Cardiac septum (tissue), 1 donor: ENCODE measurements at regions of chr3 and their contacts with region 1.

Region 1: GRCh38 chr3:152268555-152269425 is at the start of gene MBNL1:
- DNase-seq: peak; percentile 94
- total RNA-seq, gene MBNL1: 178 TPM

Region 2: GRCh38 chr3:152183473-152183872 is 85.3 kb before region 1 on chr3:
- intact Hi-C with region 1: loop called (anchors 5 kb)
- DNase-seq: no peak

Region 3: DNA sequence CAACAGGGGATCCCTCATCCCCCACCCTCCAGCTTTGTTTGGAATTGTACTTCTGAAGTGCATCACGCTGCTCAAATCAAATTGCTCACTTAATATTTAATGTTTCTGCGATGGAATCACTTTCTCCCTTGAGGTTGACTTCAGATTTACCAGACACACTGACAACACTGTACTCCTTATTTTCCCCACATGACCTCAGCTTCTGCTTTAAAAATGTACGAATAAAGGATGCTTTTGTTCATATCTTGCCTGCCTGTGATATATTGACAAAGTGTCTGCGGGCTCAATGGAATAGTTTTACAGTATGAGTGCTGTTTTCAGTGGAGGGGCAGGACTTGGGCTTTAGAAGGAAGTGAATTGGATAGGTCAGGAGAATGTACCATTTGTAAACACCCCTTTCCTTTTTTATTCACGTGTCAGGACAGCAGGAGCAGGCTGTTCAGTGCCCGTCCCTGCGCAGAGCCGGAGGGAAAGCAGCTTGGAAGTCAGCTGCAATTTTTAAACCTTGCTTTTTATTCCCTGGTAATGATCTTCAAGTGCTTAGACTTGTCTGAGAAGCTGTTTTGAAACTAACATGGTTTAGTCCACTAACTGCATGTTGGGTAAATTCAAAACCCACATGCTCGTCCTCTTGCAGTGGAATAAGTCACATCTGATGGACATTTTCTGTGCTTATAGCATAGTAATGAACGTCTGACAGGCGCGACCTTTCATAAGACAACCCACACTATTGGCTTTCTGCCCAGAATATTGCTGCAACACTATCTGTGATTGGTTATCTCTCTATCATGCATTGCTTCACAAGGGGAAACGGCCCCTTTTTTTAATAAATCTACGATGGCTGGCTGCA is 29.8 kb after region 1 on chr3:
- intact Hi-C with region 1: loop called (anchors 2 kb)
- DNase-seq: no peak

Region 4: GRCh38 chr3:152331018-152331541 is 62.3 kb after region 1 on chr3:
- intact Hi-C with region 1: loop called (anchors 1 kb)
- DNase-seq: no peak

Region 5: DNA sequence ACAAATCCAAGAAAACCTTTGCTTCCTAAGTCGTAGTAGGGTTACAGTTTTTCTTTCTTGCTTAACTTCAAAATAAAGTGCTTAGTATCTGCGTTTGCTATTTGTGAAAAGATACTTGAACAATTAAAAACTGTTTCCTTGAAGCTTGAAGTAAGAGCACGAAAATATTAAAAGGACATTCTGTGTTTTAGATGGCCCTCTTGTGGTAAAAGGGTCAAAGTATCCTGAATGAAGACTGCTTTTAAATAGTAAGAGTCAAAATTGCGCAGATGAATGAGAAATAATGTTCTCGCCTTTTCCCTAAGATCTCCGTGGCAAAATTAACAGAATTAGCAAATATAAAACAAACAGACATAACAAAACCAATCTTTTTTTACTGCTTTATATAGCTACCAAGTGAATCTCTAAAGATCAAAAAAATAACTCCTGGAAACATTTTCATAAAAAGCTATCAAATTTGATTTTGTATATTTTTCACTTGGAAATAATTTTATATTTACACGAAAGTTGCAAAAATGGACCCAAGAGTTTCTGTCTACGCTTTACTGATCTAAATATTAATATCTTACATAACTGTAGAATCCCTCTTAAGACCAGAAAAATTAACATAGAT is 175.3 kb after region 1 on chr3:
- intact Hi-C with region 1: loop called (anchors 5 kb)
- DNase-seq: no peak